ENCODE measurements at regions of chr12 and their contacts with region 1.

Region 1: DNA sequence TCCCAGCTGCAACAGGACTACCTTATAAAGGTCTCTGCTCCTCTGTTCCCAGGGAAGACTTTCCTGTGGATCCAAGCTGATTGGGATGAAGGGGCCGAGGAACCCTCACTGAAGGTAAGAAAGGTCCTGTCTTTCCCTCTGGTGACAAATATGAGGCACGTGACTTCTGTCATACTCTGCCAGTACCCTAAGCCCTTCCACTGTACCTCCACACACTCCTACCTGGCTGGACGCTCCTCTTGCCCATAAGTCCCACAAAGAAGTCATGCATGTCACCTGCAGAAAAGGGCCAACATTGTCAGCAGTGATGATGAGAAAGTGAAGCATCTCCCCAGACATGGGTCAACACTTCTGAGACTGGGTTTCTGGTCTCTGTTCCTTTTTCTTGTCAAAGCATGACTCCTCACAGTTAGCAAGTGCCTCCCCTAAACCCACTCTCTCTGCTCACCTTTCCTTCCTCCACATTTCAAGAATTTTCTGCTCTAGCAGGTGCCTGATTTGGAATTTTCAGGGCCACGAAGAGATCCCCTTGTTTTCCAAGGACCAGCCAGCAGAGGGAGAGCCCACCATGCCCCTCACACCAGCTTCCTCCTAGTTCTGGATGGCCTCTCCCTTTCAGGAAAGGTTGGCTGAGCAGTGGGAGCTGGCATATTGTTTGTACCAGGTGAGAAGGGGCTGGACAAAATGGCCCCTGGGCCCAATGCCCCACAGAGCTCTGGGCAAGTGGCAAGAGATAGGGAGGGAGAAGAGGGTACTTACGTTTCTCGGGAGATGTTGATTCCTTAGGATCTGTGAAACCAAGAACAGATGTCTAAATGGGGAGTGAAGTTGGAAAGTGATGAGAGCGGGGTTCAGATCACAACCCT is 3.5 kb downstream of the TAC3 start:
- DNase-seq: no peak
- ATAC-seq: no peak
- H3K4me3 ChIP-seq: no peak overlapping the region
- H3K27ac ChIP-seq: no peak overlapping the region
- H3K4me1 ChIP-seq: peaks cover 6 to 20% of the 10 kb centered on the region in 2 experiments; a peak in 4 of 5 replicates
- H3K27me3 ChIP-seq: peaks cover 2 to 20% of the 10 kb centered on the region in 2 experiments
- CTCF ChIP-seq: peak; percentile 34 to 48 (median 34); a peak in 4 of 6 replicates
- EP300 ChIP-seq: no peak
- POLR2A ChIP-seq: no peak
- RAD21 ChIP-seq: peak in 1 of 2 experiments; percentile 59; a peak in 2 of 4 replicates

Region 2: GRCh38 chr12:57046947-57047890 is 34.4 kb after region 1 on chr12:
- CTCF ChIA-PET with region 1: no interaction called
- POLR2A ChIA-PET with region 1: interaction called, 3 read pairs
- in situ Hi-C with region 1: loop called (anchors 5 kb)
- intact Hi-C with region 1: no loop called
- DNase-seq: no peak
- ATAC-seq: no peak
- H3K4me3 ChIP-seq: no peak overlapping the region
- H3K27ac ChIP-seq: no peak overlapping the region
- H3K4me1 ChIP-seq: peaks cover 0 to 3% of the 10 kb centered on the region in 2 experiments; a peak in 1 of 5 replicates
- H3K27me3 ChIP-seq: peaks cover 15 to 16% of the 10 kb centered on the region in 2 experiments; a peak in 4 of 5 replicates
- CTCF ChIP-seq: no peak
- EP300 ChIP-seq: no peak
- POLR2A ChIP-seq: no peak
- RAD21 ChIP-seq: no peak

Region 3: DNA sequence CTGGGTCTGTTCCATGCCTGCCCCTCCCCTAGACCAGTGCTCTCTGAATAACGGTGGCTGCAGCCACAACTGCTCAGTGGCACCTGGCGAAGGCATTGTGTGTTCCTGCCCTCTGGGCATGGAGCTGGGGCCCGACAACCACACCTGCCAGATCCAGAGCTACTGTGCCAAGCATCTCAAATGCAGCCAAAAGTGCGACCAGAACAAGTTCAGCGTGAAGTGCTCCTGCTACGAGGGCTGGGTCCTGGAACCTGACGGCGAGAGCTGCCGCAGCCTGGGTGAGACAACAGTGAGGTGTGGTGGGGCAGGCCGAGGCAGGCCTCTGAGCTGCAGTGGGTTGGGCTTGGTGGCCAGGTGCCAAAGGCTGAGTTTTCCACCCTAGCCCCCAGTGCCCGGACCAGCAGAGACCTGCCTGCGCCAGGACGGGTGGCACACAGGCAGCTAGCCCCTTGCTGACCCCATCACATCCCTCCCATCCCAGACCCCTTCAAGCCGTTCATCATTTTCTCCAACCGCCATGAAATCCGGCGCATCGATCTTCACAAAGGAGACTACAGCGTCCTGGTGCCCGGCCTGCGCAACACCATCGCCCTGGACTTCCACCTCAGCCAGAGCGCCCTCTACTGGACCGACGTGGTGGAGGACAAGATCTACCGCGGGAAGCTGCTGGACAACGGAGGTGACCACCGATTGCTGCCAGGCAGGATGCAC is 162.8 kb after region 1 on chr12:
- CTCF ChIA-PET with region 1: interaction called, 3 read pairs
- POLR2A ChIA-PET with region 1: interaction called, 6 read pairs
- in situ Hi-C with region 1: loop called (anchors 5 kb)
- intact Hi-C with region 1: no loop called
- DNase-seq: peak; percentile 82 to 88 (median 86)
- ATAC-seq: peak; percentile 88
- H3K4me3 ChIP-seq: no peak overlapping the region
- H3K27ac ChIP-seq: no peak overlapping the region
- H3K4me1 ChIP-seq: peaks cover 12 to 57% of the 10 kb centered on the region in 2 experiments; a peak in 4 of 5 replicates
- H3K27me3 ChIP-seq: peaks cover 11 to 55% of the 10 kb centered on the region in 2 experiments; a peak in 4 of 5 replicates
- CTCF ChIP-seq: peak; percentile 83 to 97 (median 94)
- EP300 ChIP-seq: no peak
- POLR2A ChIP-seq: no peak
- RAD21 ChIP-seq: peak; percentile 62 to 82

Measured in K562 (cell line).